Common myeloid progenitor, CD34-positive (primary cell): ENCODE measurements at regions of chr10 and their contacts with region 1.

Region 1: GRCh38 chr10:102225646-102226541 is at the start of gene ELOVL3:
- DNase-seq: peak; percentile 90 to 96 (median 95)
- H3K4me3 ChIP-seq: peak within 1 kb of the TSS in 4 of 7 experiments; percentile 9 to 69 (median 36)
- H3K27ac ChIP-seq: no peak within 1 kb of the TSS
- H3K4me1 ChIP-seq: peaks cover 0 to 26% (median 25%) of the 10 kb centered on the region in 4 experiments
- H3K27me3 ChIP-seq: peaks cover 6 to 46% (median 26%) of the 10 kb centered on the region in 5 experiments

Region 2: DNA sequence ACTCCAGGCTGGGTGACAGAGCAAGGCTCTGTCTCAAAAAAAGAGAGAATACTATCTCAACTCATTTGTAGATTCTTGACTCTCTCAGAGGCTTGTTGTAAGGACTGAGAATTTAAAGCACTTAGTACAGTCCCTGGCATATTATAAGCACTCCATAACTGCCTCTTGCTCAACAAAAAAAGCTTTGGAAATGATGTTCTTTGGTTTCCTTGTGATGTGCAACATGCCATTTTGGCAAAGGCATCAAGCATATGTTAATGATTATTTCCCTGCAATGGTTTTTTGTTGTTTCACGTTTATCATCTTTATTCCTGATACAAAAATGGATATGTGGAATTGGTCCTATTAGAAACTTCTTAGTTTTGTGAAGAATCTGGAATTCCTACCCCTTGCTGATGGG is 58.0 kb before region 1 on chr10:
- CTCF ChIA-PET with region 1: interaction called, 16 read pairs
- POLR2A ChIA-PET with region 1: no interaction called
- DNase-seq: no peak
- H3K4me3 ChIP-seq: no peak overlapping the region
- H3K27ac ChIP-seq: no peak overlapping the region
- H3K4me1 ChIP-seq: peaks cover 0 to 3% (median 3%) of the 10 kb centered on the region in 4 experiments
- H3K27me3 ChIP-seq: peaks cover 0 to 2% (median 0%) of the 10 kb centered on the region in 5 experiments

Region 3: DNA sequence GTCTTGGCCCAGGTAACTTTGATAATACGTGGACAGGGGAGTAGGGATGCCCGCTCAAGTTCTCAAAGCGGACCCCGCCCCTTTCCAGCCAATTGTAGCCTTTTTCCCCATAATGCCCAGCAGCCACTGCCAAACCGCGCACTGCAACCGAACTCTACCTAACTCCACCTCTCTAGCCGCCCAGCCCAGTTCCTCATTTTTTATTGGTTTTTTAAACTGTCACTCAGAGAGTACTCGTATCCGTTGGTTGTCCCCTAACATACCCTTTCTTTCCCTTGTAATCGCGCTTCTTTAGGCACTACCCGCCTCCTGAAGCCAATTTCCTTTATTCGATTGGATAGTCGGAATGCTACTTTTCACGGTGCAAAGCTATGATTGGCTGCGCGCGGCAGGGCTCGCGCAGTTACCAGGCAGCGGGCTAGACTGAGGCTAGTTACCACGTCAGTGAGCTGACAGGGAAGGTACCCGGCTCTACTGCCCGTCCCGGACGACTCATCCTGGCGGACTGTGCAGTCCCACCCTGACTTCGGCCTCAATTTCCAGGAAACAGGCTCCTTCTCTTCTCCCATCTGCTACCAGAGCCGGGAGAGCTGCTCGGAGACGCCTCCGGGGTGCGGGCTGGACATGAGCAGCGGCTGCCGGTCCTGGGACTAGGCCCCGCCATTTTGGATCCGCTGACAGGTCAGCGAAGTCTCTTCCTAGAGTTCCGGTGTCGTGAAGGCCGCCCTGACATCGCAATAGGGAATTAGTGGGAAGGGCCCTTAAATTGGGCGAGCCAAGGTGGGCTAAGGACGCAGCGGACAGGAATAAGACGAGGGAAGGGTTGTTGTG is 19.4 kb after region 1 on chr10 and contains the start of gene GBF1:
- CTCF ChIA-PET with region 1: interaction called, 29 read pairs
- POLR2A ChIA-PET with region 1: no interaction called
- DNase-seq: peak; percentile 99 to 100 (median 99)
- H3K4me3 ChIP-seq: peak within 1 kb of the TSS; percentile 90 to 100 (median 95)
- H3K27ac ChIP-seq: peak within 1 kb of the TSS; percentile 89 to 97
- H3K4me1 ChIP-seq: peaks cover 16 to 48% (median 44%) of the 10 kb centered on the region in 4 experiments
- H3K27me3 ChIP-seq: peaks cover 0 to 27% (median 10%) of the 10 kb centered on the region in 5 experiments

Region 4: GRCh38 chr10:102268375-102268888 is 42.5 kb after region 1 on chr10:
- CTCF ChIA-PET with region 1: interaction called, 12 read pairs
- POLR2A ChIA-PET with region 1: no interaction called
- DNase-seq: peak in 2 of 3 donors; percentile 5 to 10
- H3K4me3 ChIP-seq: no peak overlapping the region
- H3K27ac ChIP-seq: no peak overlapping the region
- H3K4me1 ChIP-seq: no peaks in the 10 kb centered on the region
- H3K27me3 ChIP-seq: no peaks in the 10 kb centered on the region

Region 5: GRCh38 chr10:102310361-102311024 is 84.6 kb after region 1 on chr10:
- CTCF ChIA-PET with region 1: interaction called, 11 read pairs
- POLR2A ChIA-PET with region 1: no interaction called
- DNase-seq: no peak
- H3K4me3 ChIP-seq: no peak overlapping the region
- H3K27ac ChIP-seq: no peak overlapping the region
- H3K4me1 ChIP-seq: peaks cover 4 to 33% (median 11%) of the 10 kb centered on the region in 4 experiments
- H3K27me3 ChIP-seq: no peaks in the 10 kb centered on the region

Region 6: DNA sequence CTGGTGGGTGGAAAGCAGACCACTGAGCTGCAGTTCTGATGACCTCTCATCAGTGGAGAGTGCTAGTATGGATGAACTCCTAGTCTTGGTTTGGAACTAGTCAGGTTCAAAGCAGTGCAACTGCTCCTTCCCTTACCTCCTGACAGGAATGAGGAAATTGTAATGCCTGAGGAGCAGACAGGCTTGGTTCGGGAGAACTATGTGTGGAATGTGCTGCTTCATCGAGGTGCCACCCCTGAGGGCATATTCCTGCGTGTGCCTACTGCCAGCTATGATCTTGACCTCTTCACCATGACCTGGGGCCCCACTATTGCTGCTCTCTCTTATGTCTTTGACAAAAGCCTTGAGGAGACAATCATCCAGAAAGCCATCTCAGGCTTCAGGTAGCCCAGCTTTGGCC is 142.2 kb after region 1 on chr10:
- CTCF ChIA-PET with region 1: interaction called, 13 read pairs
- POLR2A ChIA-PET with region 1: no interaction called
- DNase-seq: no peak
- H3K4me3 ChIP-seq: no peak overlapping the region
- H3K27ac ChIP-seq: no peak overlapping the region
- H3K4me1 ChIP-seq: no peaks in the 10 kb centered on the region
- H3K27me3 ChIP-seq: no peaks in the 10 kb centered on the region

Region 7: GRCh38 chr10:102691285-102692066 is 465.6 kb after region 1 on chr10:
- CTCF ChIA-PET with region 1: no interaction called
- POLR2A ChIA-PET with region 1: no interaction called
- DNase-seq: no peak
- H3K4me3 ChIP-seq: no peak overlapping the region
- H3K27ac ChIP-seq: no peak overlapping the region
- H3K4me1 ChIP-seq: no peaks in the 10 kb centered on the region
- H3K27me3 ChIP-seq: no peaks in the 10 kb centered on the region